Activated B cell treated with CpG ODN at 0.5 μM for 24 hours (primary cell): ENCODE measurements at regions of chr22 and their contacts with region 1.

Region 1: DNA sequence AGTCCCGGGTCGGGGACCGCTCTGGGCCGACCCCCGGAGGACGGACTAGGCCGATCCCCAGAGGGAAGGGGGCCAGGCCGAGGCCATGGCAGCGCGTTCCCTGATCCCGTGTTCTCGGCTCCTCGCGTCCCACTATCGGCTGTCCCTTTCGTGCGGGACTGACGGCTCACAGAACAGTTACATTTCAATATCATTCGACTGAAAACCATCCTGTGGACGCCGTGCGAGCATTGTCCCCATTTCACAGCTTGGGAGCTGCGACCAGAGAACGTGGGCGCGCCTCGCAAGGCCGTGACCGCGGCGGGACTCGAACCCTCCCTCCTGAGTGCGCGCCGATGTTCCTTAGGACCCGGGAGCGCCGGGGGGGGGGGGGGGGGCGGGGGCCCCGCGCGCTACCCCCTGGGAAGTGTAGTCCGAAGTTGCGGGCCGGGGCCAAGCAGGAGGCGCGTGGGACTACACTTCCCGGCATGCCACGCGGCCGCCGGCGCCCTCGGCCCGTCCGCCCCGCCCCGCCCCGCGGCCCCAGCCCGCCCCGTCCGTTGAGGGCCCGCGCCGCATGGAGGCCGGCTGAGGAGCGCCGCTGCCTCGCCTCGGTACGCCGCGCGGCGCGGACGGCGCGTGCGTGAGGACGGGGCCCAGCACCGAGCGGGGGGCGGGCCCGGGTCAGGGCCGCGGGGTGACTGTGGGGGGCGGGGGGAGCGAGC is at the start of gene TRABD:
- DNase-seq: peak; percentile 87
- ATAC-seq: peak; percentile 59
- H3K4me3 Mint-ChIP-seq: peak within 1 kb of the TSS; percentile 93
- H3K27ac Mint-ChIP-seq: peak within 1 kb of the TSS; percentile 84
- H3K4me1 Mint-ChIP-seq: peaks cover 42% of the 10 kb centered on the region
- H3K27me3 Mint-ChIP-seq: peaks cover 2% of the 10 kb centered on the region
- CTCF ChIP-seq: no peak
- total RNA-seq, gene TRABD: 80.6 and 86.4 TPM in 2 replicates

Region 2: GRCh38 chr22:49930739-49931412 is 254.7 kb before region 1 on chr22:
- CTCF ChIA-PET with region 1: no interaction called
- POLR2A ChIA-PET with region 1: interaction called, 62 read pairs
- intact Hi-C with region 1: loop called (anchors 1 kb)
- DNase-seq: peak; percentile 53
- ATAC-seq: peak; percentile 46
- H3K4me3 Mint-ChIP-seq: peak overlapping the region; percentile 55
- H3K27ac Mint-ChIP-seq: peak overlapping the region; percentile 79
- H3K4me1 Mint-ChIP-seq: peaks cover 56% of the 10 kb centered on the region
- H3K27me3 Mint-ChIP-seq: no peaks in the 10 kb centered on the region
- CTCF ChIP-seq: peak; percentile 21

Region 3: DNA sequence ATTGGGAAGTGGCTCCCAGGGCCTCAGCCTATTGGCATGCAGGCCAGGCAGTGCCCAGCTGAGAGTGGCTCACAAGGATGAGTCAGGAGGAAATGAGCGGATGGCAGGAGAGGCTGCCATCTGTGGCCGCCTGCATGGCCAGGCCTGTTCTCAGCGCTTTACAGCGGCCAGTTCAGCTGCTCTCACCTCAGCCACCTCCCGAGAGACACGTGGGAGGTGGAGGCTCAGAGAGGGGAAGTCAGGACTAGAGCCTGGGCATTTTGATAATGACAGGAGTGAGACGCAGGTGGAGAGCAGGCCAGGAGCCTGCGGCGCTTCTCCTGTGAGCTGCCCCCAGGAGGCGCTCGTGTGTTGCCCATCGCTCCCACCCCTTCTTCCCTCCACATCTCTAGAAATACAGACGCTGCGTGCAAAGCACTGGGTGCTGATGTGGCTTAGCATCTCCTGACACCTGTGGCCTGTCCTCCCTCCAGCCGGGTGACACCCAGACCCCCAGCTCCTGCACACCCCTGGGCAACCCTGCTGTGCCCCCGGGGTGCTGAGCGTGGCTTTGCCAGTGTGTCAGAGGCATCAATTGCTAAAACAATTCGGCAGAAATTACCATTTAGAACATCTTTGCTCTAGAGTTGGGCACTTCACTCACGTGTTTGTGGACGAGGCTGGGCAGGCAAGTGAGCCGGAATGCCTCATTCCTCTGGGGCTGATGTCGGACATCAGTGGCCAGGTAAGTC is 36.4 kb before region 1 on chr22:
- CTCF ChIA-PET with region 1: interaction called, 20 read pairs
- POLR2A ChIA-PET with region 1: interaction called, 36 read pairs
- intact Hi-C with region 1: loop called (anchors 1 kb)
- DNase-seq: peak; percentile 67
- ATAC-seq: peak; percentile 98
- H3K4me3 Mint-ChIP-seq: no peak overlapping the region
- H3K27ac Mint-ChIP-seq: no peak overlapping the region
- H3K4me1 Mint-ChIP-seq: peaks cover 4% of the 10 kb centered on the region
- H3K27me3 Mint-ChIP-seq: no peaks in the 10 kb centered on the region
- CTCF ChIP-seq: peak; percentile 66

Region 4: DNA sequence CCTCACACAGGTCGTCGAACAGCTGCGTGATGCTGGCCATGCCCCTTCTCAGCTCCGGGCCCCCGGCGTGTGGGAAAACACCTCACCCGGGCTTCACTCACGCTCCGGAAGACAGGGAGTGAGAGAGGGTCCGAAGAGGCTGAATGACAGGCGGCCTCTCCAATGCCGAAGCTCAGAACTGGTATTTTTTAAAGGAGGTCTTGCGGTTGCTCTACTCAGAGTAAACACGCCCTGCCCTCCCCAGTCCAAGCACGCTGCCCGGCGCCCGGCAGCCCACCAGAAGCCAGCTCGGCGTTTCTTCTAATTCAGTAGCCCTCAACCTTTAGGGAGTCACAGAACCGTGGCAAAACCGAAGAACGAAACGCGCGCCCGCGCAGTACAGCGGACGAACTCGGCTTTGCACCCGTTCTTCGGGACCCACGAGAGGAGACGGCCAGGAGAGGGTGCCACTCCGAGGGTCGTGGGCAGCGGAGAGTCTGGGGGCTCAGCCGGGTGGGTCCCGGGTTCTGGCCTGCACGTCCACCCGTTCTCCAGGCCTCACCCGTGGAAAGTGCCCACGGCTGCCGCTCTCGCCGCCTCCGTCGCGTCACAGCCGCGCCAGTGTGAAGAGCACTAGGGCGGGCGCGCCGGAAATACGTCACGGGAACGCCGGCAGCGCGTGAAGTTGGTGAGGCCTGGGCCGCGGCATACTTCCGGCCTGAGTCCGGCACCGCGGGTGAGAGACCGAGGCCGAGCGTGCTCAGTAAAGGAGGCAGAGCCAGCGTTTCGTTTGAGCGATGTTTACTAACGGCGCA is 59.1 kb after region 1 on chr22 and contains the start of gene TUBGCP6:
- CTCF ChIA-PET with region 1: no interaction called
- POLR2A ChIA-PET with region 1: interaction called, 30 read pairs
- intact Hi-C with region 1: loop called (anchors 2 kb)
- DNase-seq: peak; percentile 96
- ATAC-seq: peak; percentile 76
- H3K4me3 Mint-ChIP-seq: peak within 1 kb of the TSS; percentile 100
- H3K27ac Mint-ChIP-seq: peak within 1 kb of the TSS; percentile 100
- H3K4me1 Mint-ChIP-seq: peaks cover 52% of the 10 kb centered on the region
- H3K27me3 Mint-ChIP-seq: no peaks in the 10 kb centered on the region
- CTCF ChIP-seq: no peak
- total RNA-seq, gene TUBGCP6: 87.5 and 103 TPM in 2 replicates

Region 5: DNA sequence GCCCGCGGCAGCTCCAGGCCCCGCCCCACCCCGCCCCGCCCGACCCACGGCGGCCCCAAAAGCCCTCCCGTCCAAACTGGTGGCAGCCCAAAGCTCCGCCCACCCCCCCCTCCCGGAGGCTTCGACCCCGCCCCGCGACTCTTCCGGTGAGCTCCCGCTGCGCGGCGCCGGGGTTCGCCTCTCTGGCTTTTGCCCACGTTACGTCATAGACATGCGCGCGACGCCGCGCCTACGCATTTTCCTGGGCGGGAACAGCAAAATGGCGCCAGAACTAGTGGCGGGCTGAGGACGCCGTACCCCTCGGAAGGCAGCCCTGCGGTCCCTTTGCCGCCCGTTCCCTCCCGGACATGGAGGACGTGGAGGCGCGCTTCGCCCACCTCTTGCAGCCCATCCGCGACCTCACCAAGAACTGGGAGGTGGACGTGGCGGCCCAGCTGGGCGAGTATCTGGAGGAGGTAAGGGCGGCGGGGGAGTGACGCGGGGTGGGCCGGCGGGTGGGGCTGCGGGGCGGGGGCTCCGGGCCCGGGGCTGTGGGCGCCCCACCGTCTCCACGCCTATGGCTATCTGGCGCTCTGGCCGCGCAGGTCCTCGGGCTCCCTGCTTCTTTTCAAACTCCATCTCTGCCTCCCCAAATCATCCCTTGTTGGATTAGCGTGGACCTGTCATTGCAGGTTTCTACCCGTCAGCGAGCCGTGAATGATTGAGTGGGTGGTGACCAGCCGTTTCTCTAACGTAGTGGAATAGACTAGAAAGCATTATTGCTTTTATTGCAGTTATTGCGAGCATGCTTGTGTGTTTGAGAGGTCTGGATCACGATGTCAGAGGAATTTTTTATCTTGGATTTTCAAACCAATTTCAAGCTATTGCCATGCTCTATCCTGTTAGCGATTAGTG is 322.7 kb after region 1 on chr22 and contains the start of gene NCAPH2:
- CTCF ChIA-PET with region 1: no interaction called
- POLR2A ChIA-PET with region 1: interaction called, 13 read pairs
- intact Hi-C with region 1: no loop called
- DNase-seq: peak; percentile 96
- ATAC-seq: peak; percentile 74
- H3K4me3 Mint-ChIP-seq: peak within 1 kb of the TSS; percentile 94
- H3K27ac Mint-ChIP-seq: peak within 1 kb of the TSS; percentile 94
- H3K4me1 Mint-ChIP-seq: peaks cover 20% of the 10 kb centered on the region
- H3K27me3 Mint-ChIP-seq: no peaks in the 10 kb centered on the region
- CTCF ChIP-seq: no peak
- total RNA-seq, gene NCAPH2: 63.9 and 68.2 TPM in 2 replicates

Region 6: GRCh38 chr22:50544078-50544745 is 358.7 kb after region 1 on chr22:
- CTCF ChIA-PET with region 1: no interaction called
- POLR2A ChIA-PET with region 1: interaction called, 29 read pairs
- intact Hi-C with region 1: loop called (anchors 2 kb)
- DNase-seq: peak; percentile 80
- ATAC-seq: peak; percentile 38
- H3K4me3 Mint-ChIP-seq: peak overlapping the region; percentile 60
- H3K27ac Mint-ChIP-seq: peak overlapping the region; percentile 82
- H3K4me1 Mint-ChIP-seq: peaks cover 56% of the 10 kb centered on the region
- H3K27me3 Mint-ChIP-seq: no peaks in the 10 kb centered on the region
- CTCF ChIP-seq: no peak